H1 (cell line): ENCODE measurements at regions of chr6 and their contacts with region 1.

Region 1: GRCh38 chr6:42745707-42746462 is at the start of gene TBCC:
- DNase-seq: peak; percentile 86 to 96
- H3K4me3 ChIP-seq: peak within 1 kb of the TSS; percentile 88 to 99 (median 96)
- H3K27ac ChIP-seq: peak within 1 kb of the TSS; percentile 84
- H3K4me1 ChIP-seq: peaks cover 5 to 7% (median 6%) of the 10 kb centered on the region in 4 experiments; a peak in 6 of 7 replicates
- H3K27me3 ChIP-seq: no peaks in the 10 kb centered on the region
- CTCF ChIP-seq: no peak
- EP300 ChIP-seq: no peak
- POLR2A ChIP-seq: peak; percentile 89 to 91
- RAD21 ChIP-seq: no peak
- total RNA-seq, gene TBCC: 25.5 and 27.3 TPM in 2 replicates

Region 2: GRCh38 chr6:42756722-42757121 is 10.8 kb after region 1 on chr6:
- CTCF ChIA-PET with region 1: interaction called, 6 read pairs
- POLR2A ChIA-PET with region 1: interaction called, 60 read pairs
- DNase-seq: peak in 1 of 2 experiments; percentile 58
- H3K4me3 ChIP-seq: peak overlapping the region in 1 of 4 experiments; percentile 37; a peak in 1 of 8 replicates
- H3K27ac ChIP-seq: peak overlapping the region; percentile 56; the same call in 1 of the 2 replicates
- H3K4me1 ChIP-seq: peaks cover 1 to 20% (median 16%) of the 10 kb centered on the region in 4 experiments
- H3K27me3 ChIP-seq: peaks cover 0 to 2% (median 0%) of the 10 kb centered on the region in 4 experiments; a peak in 1 of 7 replicates
- CTCF ChIP-seq: no peak
- EP300 ChIP-seq: no peak
- POLR2A ChIP-seq: no peak
- RAD21 ChIP-seq: no peak

Region 3: DNA sequence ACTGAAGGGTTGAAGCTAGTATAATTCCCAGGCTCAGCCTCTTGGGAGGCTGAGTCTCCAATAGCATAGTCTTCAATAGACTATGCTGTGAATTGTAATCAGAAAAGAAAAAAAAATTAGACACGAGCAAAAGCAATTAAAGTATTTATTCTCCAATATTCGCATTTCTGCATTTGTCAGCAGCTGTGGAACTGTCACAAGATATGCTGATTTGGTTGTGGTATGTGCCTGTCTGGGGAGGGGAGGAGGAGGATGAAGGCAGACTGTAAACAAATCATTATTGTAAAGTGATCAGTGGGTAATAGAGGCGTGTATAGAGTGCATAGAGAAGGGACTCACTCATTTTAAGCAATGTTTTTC is 25.8 kb after region 1 on chr6:
- CTCF ChIA-PET with region 1: interaction called, 3 read pairs
- POLR2A ChIA-PET with region 1: interaction called, 56 read pairs
- DNase-seq: no peak
- H3K4me3 ChIP-seq: peak overlapping the region in 1 of 4 experiments; percentile 52; a peak in 1 of 8 replicates
- H3K27ac ChIP-seq: no peak overlapping the region
- H3K4me1 ChIP-seq: peaks cover 5 to 16% (median 7%) of the 10 kb centered on the region in 4 experiments; a peak in 6 of 7 replicates
- H3K27me3 ChIP-seq: no peaks in the 10 kb centered on the region; a peak in 1 of 7 replicates
- CTCF ChIP-seq: no peak
- EP300 ChIP-seq: no peak
- POLR2A ChIP-seq: no peak
- RAD21 ChIP-seq: no peak

Region 4: DNA sequence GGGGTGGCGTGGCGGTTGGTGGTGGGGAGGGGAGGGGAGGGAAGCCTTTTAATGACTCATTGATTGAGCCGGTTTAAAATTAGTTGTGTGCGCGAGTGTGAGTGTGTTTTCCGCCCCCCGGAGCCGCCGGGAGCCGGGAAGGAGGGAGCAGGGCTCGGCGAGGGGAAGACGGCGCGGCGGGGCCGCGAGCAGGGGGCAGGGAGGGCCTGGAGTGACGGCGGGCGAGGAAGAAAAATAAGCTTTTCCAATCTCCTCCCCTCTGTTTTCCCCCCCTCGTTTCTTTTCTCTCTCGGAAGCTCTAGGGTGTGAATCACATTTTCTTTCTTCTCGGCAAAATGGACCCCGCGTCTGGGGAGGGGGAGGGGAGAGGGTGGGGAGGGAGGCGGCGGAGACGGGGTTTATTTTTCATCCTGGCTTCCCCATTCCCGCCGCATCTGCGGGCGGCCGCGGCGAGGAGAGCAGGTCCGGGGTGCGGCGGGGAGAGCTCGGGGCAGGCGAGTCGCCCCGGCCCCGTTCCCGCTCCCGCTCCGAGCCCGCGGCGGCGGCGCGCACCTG is 36.8 kb after region 1 on chr6:
- CTCF ChIA-PET with region 1: interaction called, 5 read pairs
- POLR2A ChIA-PET with region 1: interaction called, 277 read pairs
- DNase-seq: peak in 1 of 2 experiments; percentile 78
- H3K4me3 ChIP-seq: peak overlapping the region; percentile 82 to 96 (median 88)
- H3K27ac ChIP-seq: peak overlapping the region; percentile 98
- H3K4me1 ChIP-seq: peaks cover 0 to 9% (median 0%) of the 10 kb centered on the region in 4 experiments; a peak in 3 of 7 replicates
- H3K27me3 ChIP-seq: no peaks in the 10 kb centered on the region
- CTCF ChIP-seq: no peak
- EP300 ChIP-seq: no peak; a peak in 1 of 3 replicates
- POLR2A ChIP-seq: peak; percentile 80 to 83; a peak in 2 of 3 replicates
- RAD21 ChIP-seq: no peak

Region 5: GRCh38 chr6:42864602-42865001 is 118.7 kb after region 1 on chr6:
- CTCF ChIA-PET with region 1: no interaction called
- POLR2A ChIA-PET with region 1: no interaction called
- DNase-seq: no peak
- H3K4me3 ChIP-seq: no peak overlapping the region
- H3K27ac ChIP-seq: no peak overlapping the region
- H3K4me1 ChIP-seq: no peaks in the 10 kb centered on the region
- H3K27me3 ChIP-seq: no peaks in the 10 kb centered on the region
- CTCF ChIP-seq: no peak
- EP300 ChIP-seq: no peak
- POLR2A ChIP-seq: no peak
- RAD21 ChIP-seq: no peak

Region 6: GRCh38 chr6:42890311-42891198 is 144.7 kb after region 1 on chr6:
- CTCF ChIA-PET with region 1: no interaction called
- POLR2A ChIA-PET with region 1: interaction called, 10 read pairs
- DNase-seq: peak; percentile 91
- H3K4me3 ChIP-seq: peak overlapping the region; percentile 76 to 94 (median 84)
- H3K27ac ChIP-seq: peak overlapping the region; percentile 94
- H3K4me1 ChIP-seq: peaks cover 0 to 5% (median 4%) of the 10 kb centered on the region in 4 experiments; a peak in 5 of 7 replicates
- H3K27me3 ChIP-seq: no peaks in the 10 kb centered on the region
- CTCF ChIP-seq: no peak
- EP300 ChIP-seq: peak in 1 of 2 experiments; percentile 99; a peak in 2 of 3 replicates
- POLR2A ChIP-seq: peak; percentile 89 to 98
- RAD21 ChIP-seq: no peak

Region 7: DNA sequence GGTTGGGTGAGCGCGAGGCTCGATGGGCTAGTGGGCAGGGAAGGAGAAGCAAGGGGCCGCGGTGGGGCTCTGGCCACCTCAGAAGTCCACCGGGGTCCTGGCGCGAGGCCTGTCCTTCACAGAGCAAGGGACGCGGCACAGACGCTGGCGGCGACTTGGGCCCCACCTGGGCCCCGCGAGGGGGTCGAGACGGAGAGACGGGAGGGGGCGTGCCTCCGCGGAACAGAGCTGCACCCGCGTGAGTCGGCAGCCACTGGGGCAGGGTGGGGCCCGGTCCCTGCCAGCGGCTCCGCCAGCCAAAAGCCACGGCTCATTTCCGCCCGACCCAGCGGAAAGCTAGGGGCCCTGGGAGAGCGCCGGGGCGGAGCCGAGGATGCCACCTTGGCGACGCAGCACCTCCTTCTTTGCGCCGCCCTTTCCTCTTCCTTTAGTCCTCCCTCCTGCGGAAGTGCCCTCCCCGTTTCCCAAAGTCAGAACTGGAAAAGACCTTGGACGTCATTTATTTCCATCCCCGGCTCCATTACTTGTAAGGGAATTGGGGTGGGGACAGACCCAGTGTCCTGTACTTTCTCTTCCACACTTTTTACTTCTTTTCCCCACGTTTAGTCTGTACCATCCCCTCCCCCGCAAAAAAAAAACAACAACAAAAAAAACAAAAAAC is 307.8 kb after region 1 on chr6 and contains the start of gene CUL7:
- CTCF ChIA-PET with region 1: no interaction called
- POLR2A ChIA-PET with region 1: no interaction called
- DNase-seq: peak; percentile 73 to 88
- H3K4me3 ChIP-seq: peak within 1 kb of the TSS; percentile 72 to 91 (median 78)
- H3K27ac ChIP-seq: peak within 1 kb of the TSS; percentile 87
- H3K4me1 ChIP-seq: peaks cover 4 to 15% (median 7%) of the 10 kb centered on the region in 4 experiments; a peak in 6 of 7 replicates
- H3K27me3 ChIP-seq: no peaks in the 10 kb centered on the region
- CTCF ChIP-seq: no peak
- EP300 ChIP-seq: no peak
- POLR2A ChIP-seq: peak in 1 of 2 experiments; percentile 92; a peak in 2 of 3 replicates
- RAD21 ChIP-seq: 0 out of 4 replicates have a peak, but pooled peaks of 1 of the 2 experiments have one; percentile 0
- total RNA-seq, gene CUL7: 10.8 and 11.4 TPM in 2 replicates